ENCODE measurements at regions of chr5 and their contacts with region 1.

Region 1: GRCh38 chr5:179907570-179908324 is at the start of gene TBC1D9B:
- DNase-seq: peak; percentile 69
- H3K4me3 Mint-ChIP-seq: peak within 1 kb of the TSS; percentile 95
- H3K27ac Mint-ChIP-seq: peak within 1 kb of the TSS; percentile 89
- H3K4me1 Mint-ChIP-seq: peaks cover 18% of the 10 kb centered on the region
- H3K27me3 Mint-ChIP-seq: peaks cover 2% of the 10 kb centered on the region
- total RNA-seq, gene TBC1D9B: 123 and 127 TPM in 2 replicates

Region 2: DNA sequence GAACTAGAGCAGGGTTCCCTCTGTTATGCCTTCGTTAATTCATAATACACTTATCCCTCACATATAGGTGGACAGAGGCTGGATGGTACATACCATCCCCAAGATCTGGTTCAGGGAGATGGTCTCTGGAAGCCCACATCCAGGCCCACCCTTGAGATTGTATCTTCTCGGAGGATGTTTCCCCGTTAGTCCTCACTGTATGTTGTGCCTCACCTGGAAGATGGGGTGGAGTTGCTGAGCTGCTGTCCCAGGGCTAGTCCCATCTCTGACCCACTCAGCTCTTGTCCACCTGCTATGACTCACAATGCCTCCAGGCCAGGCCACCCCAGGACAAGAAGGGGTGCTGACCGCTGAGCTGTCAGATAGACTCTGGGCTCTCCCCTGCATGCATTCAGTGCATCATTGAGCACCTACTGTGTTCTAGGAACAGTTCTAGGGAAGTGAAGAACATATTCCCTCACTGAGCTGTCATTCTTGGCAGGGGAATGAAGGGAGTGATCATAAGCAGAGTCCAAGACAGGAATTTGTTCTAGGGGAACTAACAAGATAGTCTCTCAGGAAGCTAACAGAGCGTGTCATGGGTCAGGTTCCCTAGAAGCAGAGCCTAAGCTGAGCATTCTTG is 226.9 kb before region 1 on chr5 and contains the start of gene CBY3:
- intact Hi-C with region 1: no loop called
- DNase-seq: no peak
- H3K4me3 Mint-ChIP-seq: peak within 1 kb of the TSS; percentile 63
- H3K27ac Mint-ChIP-seq: no peak within 1 kb of the TSS
- H3K4me1 Mint-ChIP-seq: peaks cover 21% of the 10 kb centered on the region
- H3K27me3 Mint-ChIP-seq: no peaks in the 10 kb centered on the region
- total RNA-seq, gene CBY3: 0.66 and 1.0 TPM in 2 replicates

Region 3: GRCh38 chr5:180090098-180090768 is 182.5 kb after region 1 on chr5:
- intact Hi-C with region 1: loop called (anchors 5 kb)
- DNase-seq: peak; percentile 61
- H3K4me3 Mint-ChIP-seq: peak overlapping the region; percentile 79
- H3K27ac Mint-ChIP-seq: no peak overlapping the region
- H3K4me1 Mint-ChIP-seq: peaks cover 4% of the 10 kb centered on the region
- H3K27me3 Mint-ChIP-seq: peaks cover 12% of the 10 kb centered on the region

Region 4: GRCh38 chr5:180284149-180284548 is 376.4 kb after region 1 on chr5:
- intact Hi-C with region 1: no loop called
- DNase-seq: no peak
- H3K4me3 Mint-ChIP-seq: no peak overlapping the region
- H3K27ac Mint-ChIP-seq: no peak overlapping the region
- H3K4me1 Mint-ChIP-seq: no peaks in the 10 kb centered on the region
- H3K27me3 Mint-ChIP-seq: no peaks in the 10 kb centered on the region

Region 5: DNA sequence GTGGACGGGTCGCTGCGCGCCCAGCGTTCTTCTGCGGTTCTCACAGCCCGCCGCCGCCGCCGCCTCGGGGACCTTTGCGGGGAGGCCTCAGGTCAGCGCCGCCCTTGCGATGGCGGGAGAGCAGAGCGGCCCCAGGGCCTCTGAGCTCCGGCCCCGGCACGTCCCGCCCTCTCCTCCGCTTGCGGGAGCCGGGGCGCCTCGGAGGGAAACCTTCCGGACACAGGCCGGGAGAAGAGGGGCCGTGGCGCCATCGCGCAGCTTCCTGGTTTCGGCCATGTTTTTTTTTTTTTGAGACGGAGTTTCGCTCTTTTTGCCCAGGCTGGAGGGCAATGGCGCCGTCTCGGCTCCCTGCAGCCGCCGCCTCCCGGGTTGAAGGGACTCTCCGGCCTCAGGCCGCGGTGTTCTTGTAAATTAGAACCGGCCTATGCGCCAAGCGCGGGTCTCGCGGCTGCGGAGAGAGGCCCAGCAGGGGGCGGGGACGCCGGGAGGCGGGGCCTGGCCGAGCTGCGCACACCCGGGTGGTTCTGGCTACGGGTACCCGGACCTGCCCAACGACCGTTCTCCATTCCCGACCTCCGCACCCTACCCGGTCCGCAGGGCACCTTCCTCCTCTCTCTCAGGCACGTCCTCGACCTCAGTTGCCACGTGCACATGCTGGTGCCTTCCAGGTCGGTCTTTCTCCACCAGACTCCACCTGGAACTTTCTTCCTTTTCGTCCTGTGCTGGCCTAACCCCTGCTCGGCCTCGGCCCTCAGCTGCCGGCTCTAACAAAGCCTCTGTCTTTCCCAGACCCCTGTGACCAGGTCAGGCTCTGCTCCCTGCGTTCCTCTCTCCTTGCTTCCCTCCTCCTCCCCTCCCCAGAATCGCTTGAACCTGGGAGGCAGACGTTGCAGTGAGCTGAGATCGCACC is 923.6 kb after region 1 on chr5:
- intact Hi-C with region 1: no loop called
- DNase-seq: peak; percentile 76
- H3K4me3 Mint-ChIP-seq: peak overlapping the region; percentile 91
- H3K27ac Mint-ChIP-seq: peak overlapping the region; percentile 99
- H3K4me1 Mint-ChIP-seq: peaks cover 33% of the 10 kb centered on the region
- H3K27me3 Mint-ChIP-seq: no peaks in the 10 kb centered on the region

Measured in activated T-helper 1 cell treated with anti-CD3 and anti-CD28 coated beads, Interleukin-12 subunit alpha, Interleukin-12 subunit beta, Interleukin-2, Interleukin-4 antibody, amounts not matched to agents 30 ng/mL and 10 ng/mL and 1 ng/mL, durations not matched to agents 14 hours and 24 hours and 36 hours (primary cell).